ENCODE measurements at regions of chr14 and their contacts with region 1.

Region 1: GRCh38 chr14:76050797-76051392 is 65.3 kb downstream of the IFT43 start:
- DNase-seq: peak; percentile 13 to 74 (median 40)
- ATAC-seq: peak; percentile 51
- H3K4me3 ChIP-seq: no peak overlapping the region
- H3K4me3 Mint-ChIP-seq: no peak overlapping the region
- H3K27ac ChIP-seq: no peak overlapping the region
- H3K27ac Mint-ChIP-seq: no peak overlapping the region
- H3K4me1 ChIP-seq: no peaks in the 10 kb centered on the region
- H3K4me1 Mint-ChIP-seq: no peaks in the 10 kb centered on the region
- H3K27me3 ChIP-seq: no peaks in the 10 kb centered on the region
- H3K27me3 Mint-ChIP-seq: no peaks in the 10 kb centered on the region
- CTCF ChIP-seq: peak; percentile 86

Region 2: GRCh38 chr14:76293923-76294322 is 243.0 kb after region 1 on chr14:
- CTCF ChIA-PET with region 1: no interaction called
- POLR2A ChIA-PET with region 1: no interaction called
- intact Hi-C with region 1: no loop called
- DNase-seq: no peak
- ATAC-seq: no peak
- H3K4me3 ChIP-seq: no peak overlapping the region
- H3K4me3 Mint-ChIP-seq: no peak overlapping the region
- H3K27ac ChIP-seq: no peak overlapping the region
- H3K27ac Mint-ChIP-seq: no peak overlapping the region
- H3K4me1 ChIP-seq: no peaks in the 10 kb centered on the region
- H3K4me1 Mint-ChIP-seq: no peaks in the 10 kb centered on the region
- H3K27me3 ChIP-seq: peaks cover 0 to 7% of the 10 kb centered on the region in 2 experiments
- H3K27me3 Mint-ChIP-seq: peaks cover 31% of the 10 kb centered on the region
- CTCF ChIP-seq: no peak

Region 3: DNA sequence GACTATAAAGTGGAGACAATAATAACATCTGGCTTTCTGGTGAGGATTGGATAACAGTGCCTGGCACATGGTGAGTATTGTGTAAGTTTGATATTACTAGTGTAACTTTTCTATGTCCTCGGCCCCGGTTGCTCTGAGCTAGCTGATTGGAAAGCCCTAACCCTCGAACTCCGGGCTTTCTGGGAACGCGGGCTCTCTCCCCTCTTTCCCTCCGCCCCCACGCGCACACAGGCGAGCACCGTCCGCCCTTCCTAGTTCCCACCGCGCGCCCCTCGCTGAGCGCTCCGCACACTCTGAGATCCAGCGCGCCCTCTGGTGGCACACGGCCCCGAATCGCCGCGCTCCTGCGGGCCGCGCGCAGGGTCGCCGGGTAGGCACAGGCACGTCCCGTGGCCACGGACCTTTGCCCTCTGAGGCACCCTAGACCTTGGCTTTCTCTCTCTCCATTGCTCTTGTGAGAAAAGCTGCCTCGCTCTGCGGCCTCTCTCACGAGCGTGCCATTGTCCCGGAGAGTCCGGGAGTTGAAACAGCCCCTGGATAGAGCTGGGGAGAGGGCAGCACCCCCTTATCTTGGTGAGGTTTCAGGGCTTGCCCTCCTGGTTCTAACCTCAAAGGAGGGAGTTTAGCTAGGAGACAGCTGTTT is 301.9 kb after region 1 on chr14:
- CTCF ChIA-PET with region 1: interaction called, 16 read pairs
- POLR2A ChIA-PET with region 1: no interaction called
- intact Hi-C with region 1: loop called (anchors 1 kb)
- DNase-seq: peak; percentile 16 to 65 (median 36)
- ATAC-seq: no peak
- H3K4me3 ChIP-seq: no peak overlapping the region
- H3K4me3 Mint-ChIP-seq: no peak overlapping the region
- H3K27ac ChIP-seq: no peak overlapping the region
- H3K27ac Mint-ChIP-seq: no peak overlapping the region
- H3K4me1 ChIP-seq: peaks cover 7% of the 10 kb centered on the region
- H3K4me1 Mint-ChIP-seq: peaks cover 4% of the 10 kb centered on the region
- H3K27me3 ChIP-seq: peaks cover 11 to 14% of the 10 kb centered on the region in 2 experiments
- H3K27me3 Mint-ChIP-seq: peaks cover 76% of the 10 kb centered on the region
- CTCF ChIP-seq: peak; percentile 74

Region 4: DNA sequence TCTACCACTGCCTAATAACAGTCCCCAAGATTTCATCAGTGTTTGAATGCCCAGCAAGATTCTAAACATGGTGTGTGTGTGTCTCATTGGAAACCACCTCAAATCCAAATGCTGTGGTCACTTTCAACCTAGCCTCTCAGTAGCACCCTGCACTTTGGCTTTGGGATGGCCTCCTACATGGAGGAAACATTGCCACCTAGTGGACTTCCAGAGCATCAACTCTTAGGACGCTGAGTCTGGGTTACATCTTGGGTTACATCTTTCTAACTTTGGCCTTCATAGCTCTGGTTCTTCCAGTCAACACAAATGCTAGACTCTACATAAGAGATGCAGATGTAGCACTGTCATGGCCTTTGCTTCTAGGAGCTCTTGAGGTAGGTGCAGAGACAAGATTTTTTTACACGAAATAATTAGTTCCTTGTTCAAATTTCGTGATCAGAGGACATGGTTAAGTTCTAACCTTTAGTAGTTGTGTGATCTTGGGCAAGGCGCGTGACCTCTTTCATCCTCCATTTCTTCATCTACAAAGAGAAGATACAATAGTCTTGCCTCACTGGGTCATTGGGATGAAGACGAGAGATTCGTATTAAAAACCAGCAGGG is 596.9 kb after region 1 on chr14:
- CTCF ChIA-PET with region 1: interaction called, 6 read pairs
- POLR2A ChIA-PET with region 1: no interaction called
- intact Hi-C with region 1: loop called (anchors 1 kb)
- DNase-seq: peak in 4 of 14 experiments; percentile 8 to 50 (median 32)
- ATAC-seq: no peak
- H3K4me3 ChIP-seq: no peak overlapping the region
- H3K4me3 Mint-ChIP-seq: no peak overlapping the region
- H3K27ac ChIP-seq: no peak overlapping the region
- H3K27ac Mint-ChIP-seq: no peak overlapping the region
- H3K4me1 ChIP-seq: no peaks in the 10 kb centered on the region
- H3K4me1 Mint-ChIP-seq: no peaks in the 10 kb centered on the region
- H3K27me3 ChIP-seq: peaks cover 0 to 15% of the 10 kb centered on the region in 2 experiments
- H3K27me3 Mint-ChIP-seq: peaks cover 34% of the 10 kb centered on the region
- CTCF ChIP-seq: peak; percentile 70

Measured in CD4-positive, alpha-beta T cell (primary cell).